ENCODE measurements at regions of chr16 and their contacts with region 1.

Region 1: GRCh38 chr16:56700195-56700594 is 17.9 kb downstream of the MT1X start:
- DNase-seq: no peak
- ATAC-seq: no peak
- H3K4me3 ChIP-seq: no peak overlapping the region
- H3K4me3 Mint-ChIP-seq: no peak overlapping the region
- H3K27ac ChIP-seq: no peak overlapping the region
- H3K27ac Mint-ChIP-seq: no peak overlapping the region
- H3K4me1 ChIP-seq: peaks cover 4% of the 10 kb centered on the region
- H3K4me1 Mint-ChIP-seq: peaks cover 11% of the 10 kb centered on the region
- H3K27me3 ChIP-seq: no peaks in the 10 kb centered on the region
- H3K27me3 Mint-ChIP-seq: no peaks in the 10 kb centered on the region
- CTCF ChIP-seq: no peak

Region 2: GRCh38 chr16:55944377-55944802 is 755.8 kb before region 1 on chr16:
- CTCF ChIA-PET with region 1: no interaction called
- POLR2A ChIA-PET with region 1: no interaction called
- intact Hi-C with region 1: loop called in 1 of 2 experiments (anchors 5 kb)
- DNase-seq: peak; percentile 8 to 70 (median 50)
- ATAC-seq: no peak
- H3K4me3 ChIP-seq: no peak overlapping the region
- H3K4me3 Mint-ChIP-seq: no peak overlapping the region
- H3K27ac ChIP-seq: no peak overlapping the region
- H3K27ac Mint-ChIP-seq: no peak overlapping the region
- H3K4me1 ChIP-seq: no peaks in the 10 kb centered on the region
- H3K4me1 Mint-ChIP-seq: no peaks in the 10 kb centered on the region
- H3K27me3 ChIP-seq: no peaks in the 10 kb centered on the region
- H3K27me3 Mint-ChIP-seq: peaks cover 44% of the 10 kb centered on the region
- CTCF ChIP-seq: peak; percentile 87

Region 3: GRCh38 chr16:56600398-56600999 is 99.7 kb before region 1 on chr16:
- CTCF ChIA-PET with region 1: interaction called, 27 read pairs
- POLR2A ChIA-PET with region 1: no interaction called
- intact Hi-C with region 1: no loop called
- DNase-seq: peak in 4 of 9 experiments; percentile 25 to 71 (median 48)
- ATAC-seq: peak; percentile 62
- H3K4me3 ChIP-seq: no peak overlapping the region
- H3K4me3 Mint-ChIP-seq: no peak overlapping the region
- H3K27ac ChIP-seq: no peak overlapping the region
- H3K27ac Mint-ChIP-seq: no peak overlapping the region
- H3K4me1 ChIP-seq: no peaks in the 10 kb centered on the region
- H3K4me1 Mint-ChIP-seq: peaks cover 1% of the 10 kb centered on the region
- H3K27me3 ChIP-seq: peaks cover 0 to 3% of the 10 kb centered on the region in 2 experiments
- H3K27me3 Mint-ChIP-seq: peaks cover 4% of the 10 kb centered on the region
- CTCF ChIP-seq: peak; percentile 42

Region 4: GRCh38 chr16:56657555-56658326 is 42.5 kb before region 1 on chr16 and contains the start of gene MT1F:
- CTCF ChIA-PET with region 1: interaction called, 5 read pairs
- POLR2A ChIA-PET with region 1: interaction called, 3 read pairs
- intact Hi-C with region 1: loop called in 1 of 2 experiments (anchors 5 kb)
- DNase-seq: peak; percentile 32 to 86 (median 73)
- ATAC-seq: peak; percentile 78
- H3K4me3 ChIP-seq: peak within 1 kb of the TSS; percentile 68 to 70
- H3K4me3 Mint-ChIP-seq: peak within 1 kb of the TSS; percentile 97
- H3K27ac ChIP-seq: peak within 1 kb of the TSS; percentile 44 to 69
- H3K27ac Mint-ChIP-seq: peak within 1 kb of the TSS; percentile 94
- H3K4me1 ChIP-seq: peaks cover 20% of the 10 kb centered on the region
- H3K4me1 Mint-ChIP-seq: peaks cover 27% of the 10 kb centered on the region
- H3K27me3 ChIP-seq: no peaks in the 10 kb centered on the region
- H3K27me3 Mint-ChIP-seq: peaks cover 3% of the 10 kb centered on the region
- CTCF ChIP-seq: no peak
- total RNA-seq, gene MT1F: 5.6 to 7.4 TPM

Region 5: DNA sequence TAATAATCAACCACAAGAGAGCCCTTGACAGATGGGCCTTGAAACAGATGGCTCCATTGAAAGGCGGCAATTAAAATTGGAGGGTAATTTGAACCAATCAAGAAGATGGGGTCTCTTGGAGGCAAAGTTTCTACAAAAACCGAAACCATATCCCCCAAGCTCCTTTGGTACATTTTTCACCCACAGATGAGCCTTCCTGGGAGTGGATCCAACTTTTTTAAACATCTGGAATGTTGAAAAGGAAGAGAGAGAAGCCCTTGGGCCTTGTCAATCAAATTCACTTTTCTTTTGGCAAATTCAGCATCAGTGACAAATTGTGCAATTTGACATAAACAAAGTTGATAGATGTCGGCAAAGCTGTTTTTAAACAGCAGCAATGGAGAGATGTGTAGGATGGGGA is 16.6 kb after region 1 on chr16:
- CTCF ChIA-PET with region 1: interaction called, 24 read pairs
- POLR2A ChIA-PET with region 1: no interaction called
- intact Hi-C with region 1: no loop called
- DNase-seq: no peak
- ATAC-seq: no peak
- H3K4me3 ChIP-seq: no peak overlapping the region
- H3K4me3 Mint-ChIP-seq: no peak overlapping the region
- H3K27ac ChIP-seq: no peak overlapping the region
- H3K27ac Mint-ChIP-seq: no peak overlapping the region
- H3K4me1 ChIP-seq: no peaks in the 10 kb centered on the region
- H3K4me1 Mint-ChIP-seq: peaks cover 14% of the 10 kb centered on the region
- H3K27me3 ChIP-seq: no peaks in the 10 kb centered on the region
- H3K27me3 Mint-ChIP-seq: no peaks in the 10 kb centered on the region
- CTCF ChIP-seq: no peak

Region 6: GRCh38 chr16:57013229-57013628 is 313.0 kb after region 1 on chr16:
- CTCF ChIA-PET with region 1: no interaction called
- POLR2A ChIA-PET with region 1: no interaction called
- intact Hi-C with region 1: no loop called
- DNase-seq: no peak
- ATAC-seq: no peak
- H3K4me3 ChIP-seq: no peak overlapping the region
- H3K4me3 Mint-ChIP-seq: peak overlapping the region; percentile 54
- H3K27ac ChIP-seq: peak overlapping the region in 1 of 2 experiments; percentile 89
- H3K27ac Mint-ChIP-seq: peak overlapping the region; percentile 97
- H3K4me1 ChIP-seq: peaks cover 90% of the 10 kb centered on the region
- H3K4me1 Mint-ChIP-seq: peaks cover 83% of the 10 kb centered on the region
- H3K27me3 ChIP-seq: no peaks in the 10 kb centered on the region
- H3K27me3 Mint-ChIP-seq: no peaks in the 10 kb centered on the region
- CTCF ChIP-seq: no peak

Region 7: GRCh38 chr16:57091975-57092785 is 392.0 kb after region 1 on chr16 and contains the start of gene CPNE2:
- CTCF ChIA-PET with region 1: no interaction called
- POLR2A ChIA-PET with region 1: no interaction called
- intact Hi-C with region 1: no loop called
- DNase-seq: peak in 2 of 9 experiments; percentile 20 to 50
- ATAC-seq: peak; percentile 57
- H3K4me3 ChIP-seq: peak within 1 kb of the TSS; percentile 31 to 49
- H3K4me3 Mint-ChIP-seq: peak within 1 kb of the TSS; percentile 79
- H3K27ac ChIP-seq: no peak within 1 kb of the TSS
- H3K27ac Mint-ChIP-seq: peak within 1 kb of the TSS; percentile 13
- H3K4me1 ChIP-seq: peaks cover 14% of the 10 kb centered on the region
- H3K4me1 Mint-ChIP-seq: peaks cover 14% of the 10 kb centered on the region
- H3K27me3 ChIP-seq: peaks cover 0 to 5% of the 10 kb centered on the region in 2 experiments
- H3K27me3 Mint-ChIP-seq: no peaks in the 10 kb centered on the region
- CTCF ChIP-seq: no peak
- total RNA-seq, gene CPNE2: 5.7 to 6.8 TPM

Measured in CD8-positive, alpha-beta T cell (primary cell).